ENCODE measurements at regions of chr15 and their contacts with region 1.

Region 1: DNA sequence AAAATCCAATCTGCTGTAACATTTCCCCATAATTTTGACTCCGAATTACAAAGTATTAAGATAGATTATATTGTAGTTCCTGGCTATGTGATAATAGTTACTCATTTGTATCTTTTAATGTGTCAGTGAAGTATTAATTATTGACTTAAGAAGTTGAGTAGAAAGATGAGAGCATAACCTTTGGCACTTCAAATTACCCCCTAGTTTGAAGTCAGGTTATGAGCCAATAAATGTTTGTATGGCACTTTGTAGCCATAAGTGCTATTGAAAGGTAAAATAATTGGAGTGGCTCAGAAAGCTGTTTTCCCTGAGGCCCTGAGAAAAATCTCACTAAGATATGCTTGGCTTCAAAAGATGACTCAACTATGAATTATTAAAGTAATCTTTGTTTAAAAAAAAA is 31.0 kb downstream of the IREB2 start:
- DNase-seq: no peak
- ATAC-seq: no peak
- H3K4me3 ChIP-seq: no peak overlapping the region
- H3K27ac ChIP-seq: peak overlapping the region; percentile 55; the same call in 1 of the 2 replicates
- H3K4me1 ChIP-seq: no peaks in the 10 kb centered on the region; the same call in 1 of the 2 replicates
- H3K27me3 ChIP-seq: no peaks in the 10 kb centered on the region
- CTCF ChIP-seq: no peak

Region 2: DNA sequence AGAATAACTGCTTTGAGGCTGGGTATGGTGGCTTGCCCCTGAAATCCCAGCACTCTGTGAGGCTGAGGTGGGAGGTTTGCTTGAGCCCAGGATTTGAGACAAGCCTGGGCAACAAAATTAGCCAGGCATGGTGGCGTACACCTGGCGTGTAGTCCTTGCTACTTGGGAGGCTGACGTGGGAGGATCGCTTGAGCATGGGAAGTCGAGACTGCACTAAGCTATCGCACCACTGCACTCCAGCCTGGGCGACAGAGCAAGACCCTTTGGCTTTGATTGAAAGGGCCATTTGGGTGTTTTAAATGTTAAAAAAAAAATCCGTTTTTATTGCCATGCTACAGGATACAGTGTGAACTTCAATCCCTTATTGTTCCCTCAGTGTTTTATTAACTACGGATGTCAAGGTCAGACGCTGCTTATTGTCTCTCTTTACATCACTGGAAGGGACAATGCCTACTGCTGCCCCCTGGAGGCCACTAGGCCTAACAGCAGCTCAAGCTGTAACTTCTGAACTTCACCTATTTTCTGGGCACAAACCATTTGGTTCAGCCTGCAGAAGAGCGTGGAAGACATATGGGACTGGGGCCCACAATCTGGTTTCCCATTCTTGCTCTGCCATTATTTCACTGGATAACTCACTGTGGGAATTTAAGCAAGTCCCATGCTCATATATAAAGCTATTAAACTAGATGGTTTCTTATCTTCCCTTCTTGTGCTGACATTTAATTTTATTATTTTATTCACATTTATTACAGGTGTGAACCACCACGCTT is 46.3 kb before region 1 on chr15:
- CTCF ChIA-PET with region 1: interaction called, 13 read pairs
- POLR2A ChIA-PET with region 1: no interaction called
- in situ Hi-C with region 1: no loop called
- intact Hi-C with region 1: no loop called
- DNase-seq: peak; percentile 52
- ATAC-seq: peak; percentile 90
- H3K4me3 ChIP-seq: no peak overlapping the region
- H3K27ac ChIP-seq: no peak overlapping the region
- H3K4me1 ChIP-seq: no peaks in the 10 kb centered on the region
- H3K27me3 ChIP-seq: peaks cover 2% of the 10 kb centered on the region; the same call in 1 of the 2 replicates
- CTCF ChIP-seq: peak; percentile 96

Region 3: GRCh38 chr15:78599189-78599588 is 130.2 kb after region 1 on chr15:
- CTCF ChIA-PET with region 1: interaction called, 10 read pairs
- POLR2A ChIA-PET with region 1: no interaction called
- in situ Hi-C with region 1: no loop called
- intact Hi-C with region 1: no loop called
- DNase-seq: no peak
- ATAC-seq: no peak
- H3K4me3 ChIP-seq: no peak overlapping the region
- H3K27ac ChIP-seq: no peak overlapping the region
- H3K4me1 ChIP-seq: no peaks in the 10 kb centered on the region
- H3K27me3 ChIP-seq: no peaks in the 10 kb centered on the region
- CTCF ChIP-seq: no peak

Measured in Panc1 (cell line).